Pancreas (tissue), 10 donors: ENCODE measurements at regions of chr9 and their contacts with region 1.

Region 1: GRCh38 chr9:33721674-33722358 is 73.5 kb upstream of the PRSS3 start:
- DNase-seq: peak; percentile 71 to 98 (median 90)
- ATAC-seq: peak; percentile 90 to 99 (median 95)
- H3K4me3 ChIP-seq: no peak overlapping the region
- H3K27ac ChIP-seq: no peak overlapping the region
- H3K4me1 ChIP-seq: peaks cover 0 to 3% (median 0%) of the 10 kb centered on the region in 3 donors
- H3K27me3 ChIP-seq: no peaks in the 10 kb centered on the region
- CTCF ChIP-seq: peak; percentile 100

Region 2: DNA sequence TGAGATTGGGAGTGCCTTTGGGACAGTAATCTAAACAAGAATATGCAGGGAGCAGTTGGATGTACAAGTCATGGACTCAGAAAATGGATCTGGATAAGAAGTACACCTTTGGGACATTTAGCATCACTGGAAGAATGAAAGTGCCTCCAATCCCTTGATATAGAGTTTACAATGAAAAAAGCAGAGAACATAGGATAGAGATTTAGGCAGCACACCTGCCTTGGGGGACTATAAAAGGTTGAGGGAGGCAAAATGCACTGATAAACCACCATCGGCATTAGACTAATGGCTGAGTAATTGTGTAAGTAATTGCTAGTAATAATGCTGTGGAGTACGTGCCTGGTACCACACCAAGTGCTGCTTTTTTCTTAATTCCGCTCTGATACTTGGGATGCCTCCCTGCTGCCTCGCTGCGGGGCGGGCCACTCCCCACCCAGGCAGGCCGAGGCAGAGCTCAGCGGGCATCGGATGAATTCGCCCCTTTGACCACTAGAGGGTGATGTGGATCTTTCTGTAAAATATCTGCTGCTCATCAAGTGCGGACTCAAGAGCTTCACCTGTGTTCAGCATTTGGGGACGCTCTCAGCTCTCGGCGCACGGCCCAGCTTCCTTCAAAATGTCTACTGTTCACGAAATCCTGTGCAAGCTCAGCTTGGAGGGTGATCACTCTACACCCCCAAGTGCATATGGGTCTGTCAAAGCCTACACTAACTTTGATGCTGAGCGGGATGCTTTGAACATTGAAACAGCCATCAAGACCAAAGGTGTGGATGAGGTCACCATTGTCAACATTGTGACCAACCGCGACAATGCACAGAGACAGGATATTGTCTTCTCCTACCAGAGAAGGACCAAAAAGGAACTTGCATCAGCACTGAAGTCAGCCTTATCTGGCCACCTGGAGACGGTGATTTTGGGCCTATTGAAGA is 97.9 kb before region 1 on chr9:
- intact Hi-C with region 1: loop called in 2 of 3 experiments (anchors 5 kb)
- DNase-seq: peak in 5 of 6 donors; percentile 37 to 74 (median 47)
- ATAC-seq: peak; percentile 76 to 99 (median 98)
- H3K4me3 ChIP-seq: no peak overlapping the region
- H3K27ac ChIP-seq: no peak overlapping the region
- H3K4me1 ChIP-seq: no peaks in the 10 kb centered on the region
- H3K27me3 ChIP-seq: no peaks in the 10 kb centered on the region
- CTCF ChIP-seq: peak; percentile 60 to 92 (median 86)

Region 3: GRCh38 chr9:34072868-34073590 is 351.2 kb after region 1 on chr9:
- intact Hi-C with region 1: no loop called
- DNase-seq: peak in 3 of 6 donors; percentile 62 to 70 (median 63)
- ATAC-seq: peak; percentile 88 to 95 (median 94)
- H3K4me3 ChIP-seq: no peak overlapping the region
- H3K27ac ChIP-seq: peak overlapping the region; percentile 44 to 71 (median 53)
- H3K4me1 ChIP-seq: peaks cover 14 to 40% (median 20%) of the 10 kb centered on the region in 3 donors
- H3K27me3 ChIP-seq: no peaks in the 10 kb centered on the region
- CTCF ChIP-seq: no peak